ENCODE measurements at regions of chr12 and their contacts with region 1.

Region 1: GRCh38 chr12:54658306-54659264 is 10.4 kb upstream of the DCD start:
- DNase-seq: peak; percentile 60
- ATAC-seq: peak; percentile 100
- H3K4me3 ChIP-seq: 0 out of 4 replicates have a peak overlapping the region, but pooled peaks of 1 of the 2 experiments have one; percentile 8
- H3K27ac ChIP-seq: no peak overlapping the region
- H3K4me1 ChIP-seq: peaks cover 0 to 8% of the 10 kb centered on the region in 2 experiments; a peak in 2 of 4 replicates
- H3K27me3 ChIP-seq: no peaks in the 10 kb centered on the region
- CTCF ChIP-seq: peak; percentile 44 to 88 (median 80); a peak in 5 of 6 replicates
- POLR2A ChIP-seq: no peak
- RAD21 ChIP-seq: peak; percentile 41; the same call in 1 of the 2 replicates

Region 2: GRCh38 chr12:54526812-54527630 is 131.6 kb before region 1 on chr12:
- CTCF ChIA-PET with region 1: interaction called, 13 read pairs
- POLR2A ChIA-PET with region 1: no interaction called
- RAD21 ChIA-PET with region 1: no interaction called
- intact Hi-C with region 1: no loop called
- DNase-seq: peak; percentile 53
- ATAC-seq: peak; percentile 97
- H3K4me3 ChIP-seq: no peak overlapping the region
- H3K27ac ChIP-seq: no peak overlapping the region
- H3K4me1 ChIP-seq: 0 out of 4 replicates have a peak, but pooled peaks cover 0 to 3% of the 10 kb centered on the region in 2 experiments
- H3K27me3 ChIP-seq: peaks cover 51% of the 10 kb centered on the region
- CTCF ChIP-seq: peak; percentile 58 to 96 (median 89); a peak in 5 of 6 replicates
- POLR2A ChIP-seq: no peak
- RAD21 ChIP-seq: peak; percentile 78

Region 3: GRCh38 chr12:54680374-54680773 is 21.8 kb after region 1 on chr12:
- CTCF ChIA-PET with region 1: interaction called, 10 read pairs
- POLR2A ChIA-PET with region 1: no interaction called
- RAD21 ChIA-PET with region 1: no interaction called
- intact Hi-C with region 1: no loop called
- DNase-seq: peak; percentile 56
- ATAC-seq: peak; percentile 98
- H3K4me3 ChIP-seq: no peak overlapping the region
- H3K27ac ChIP-seq: no peak overlapping the region
- H3K4me1 ChIP-seq: 0 out of 4 replicates have a peak, but pooled peaks cover 0 to 2% of the 10 kb centered on the region in 2 experiments
- H3K27me3 ChIP-seq: peaks cover 54% of the 10 kb centered on the region
- CTCF ChIP-seq: peak; percentile 8 to 80 (median 74); a peak in 4 of 6 replicates
- POLR2A ChIP-seq: no peak
- RAD21 ChIP-seq: 0 out of 2 replicates have a peak, but pooled peaks have one; percentile 6

Region 4: DNA sequence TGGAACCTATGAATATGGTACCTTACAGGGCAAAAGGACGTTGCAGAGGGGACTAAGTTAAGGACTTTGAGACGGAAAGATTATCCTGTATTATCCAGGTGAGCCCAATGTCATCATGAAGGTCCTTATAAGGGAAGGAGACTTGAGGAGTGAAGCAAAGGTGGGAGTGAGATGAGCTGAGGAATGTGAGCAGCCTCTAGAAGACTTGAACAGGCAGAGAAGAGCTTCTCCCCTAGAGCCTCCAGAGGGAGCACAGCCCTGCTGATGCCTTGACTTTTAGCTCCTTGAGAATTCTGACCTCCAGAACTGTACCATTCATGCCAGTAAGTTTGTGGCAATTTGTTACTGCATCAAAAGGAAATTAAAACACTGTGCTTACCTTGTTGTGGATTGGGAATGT is 31.4 kb after region 1 on chr12:
- CTCF ChIA-PET with region 1: interaction called, 23 read pairs
- POLR2A ChIA-PET with region 1: no interaction called
- RAD21 ChIA-PET with region 1: no interaction called
- intact Hi-C with region 1: no loop called
- DNase-seq: peak; percentile 26
- ATAC-seq: peak; percentile 94
- H3K4me3 ChIP-seq: no peak overlapping the region
- H3K27ac ChIP-seq: no peak overlapping the region
- H3K4me1 ChIP-seq: no peaks in the 10 kb centered on the region
- H3K27me3 ChIP-seq: peaks cover 63% of the 10 kb centered on the region
- CTCF ChIP-seq: peak in 2 of 3 experiments; percentile 46 to 63; a peak in 4 of 6 replicates
- POLR2A ChIP-seq: no peak
- RAD21 ChIP-seq: no peak

Region 5: DNA sequence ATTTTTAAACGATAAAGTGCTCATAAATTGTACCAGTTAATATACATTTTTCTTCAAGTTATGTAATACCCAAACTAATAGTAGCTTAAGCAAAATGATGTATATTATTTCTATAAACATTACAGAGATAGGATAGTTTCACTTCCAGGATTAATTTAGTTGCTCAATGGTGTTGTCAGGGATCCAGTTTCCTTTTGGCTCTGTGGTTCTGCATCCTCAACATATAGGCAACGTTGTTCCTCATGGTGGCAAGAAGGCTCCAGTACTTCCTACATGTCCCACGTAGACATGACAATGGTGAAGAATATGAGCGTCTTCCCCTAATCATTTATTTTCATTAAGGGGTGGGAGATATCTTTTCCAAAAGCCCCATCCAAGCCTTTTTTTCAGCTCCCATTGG is 50.2 kb after region 1 on chr12:
- CTCF ChIA-PET with region 1: no interaction called
- POLR2A ChIA-PET with region 1: no interaction called
- RAD21 ChIA-PET with region 1: no interaction called
- intact Hi-C with region 1: no loop called
- DNase-seq: no peak
- ATAC-seq: no peak
- H3K4me3 ChIP-seq: no peak overlapping the region
- H3K27ac ChIP-seq: no peak overlapping the region
- H3K4me1 ChIP-seq: no peaks in the 10 kb centered on the region
- H3K27me3 ChIP-seq: peaks cover 45% of the 10 kb centered on the region
- CTCF ChIP-seq: no peak
- POLR2A ChIP-seq: no peak
- RAD21 ChIP-seq: no peak

Measured in HCT116 (cell line).